Gastrocnemius medialis (tissue), 4 donors: ENCODE measurements at regions of chr16 and their contacts with region 1.

Region 1: DNA sequence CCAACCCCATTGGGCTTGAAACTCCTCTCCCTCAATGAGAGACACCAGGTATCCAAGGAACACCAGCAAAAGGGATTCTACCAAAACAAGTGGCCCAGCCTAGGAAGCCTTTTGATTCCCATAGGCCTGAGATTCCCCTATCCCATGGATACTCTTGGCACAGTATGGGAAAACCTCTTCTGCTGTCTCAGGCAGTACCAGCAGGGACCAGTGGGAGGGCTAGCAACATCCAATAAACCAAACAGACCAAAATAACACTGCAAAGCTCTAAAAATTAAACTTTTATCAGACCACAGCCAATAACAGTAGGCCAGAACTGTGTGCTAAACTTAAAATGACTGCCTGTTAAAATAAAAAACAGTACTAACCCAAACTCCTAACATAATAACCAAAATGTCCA is 153.9 kb upstream of the CES5A start:
- DNase-seq: no peak
- ATAC-seq: no peak
- H3K4me3 ChIP-seq: no peak overlapping the region
- H3K27ac ChIP-seq: no peak overlapping the region
- H3K4me1 ChIP-seq: no peaks in the 10 kb centered on the region
- H3K27me3 ChIP-seq: no peaks in the 10 kb centered on the region
- CTCF ChIP-seq: no peak
- POLR2A ChIP-seq: no peak

Region 2: DNA sequence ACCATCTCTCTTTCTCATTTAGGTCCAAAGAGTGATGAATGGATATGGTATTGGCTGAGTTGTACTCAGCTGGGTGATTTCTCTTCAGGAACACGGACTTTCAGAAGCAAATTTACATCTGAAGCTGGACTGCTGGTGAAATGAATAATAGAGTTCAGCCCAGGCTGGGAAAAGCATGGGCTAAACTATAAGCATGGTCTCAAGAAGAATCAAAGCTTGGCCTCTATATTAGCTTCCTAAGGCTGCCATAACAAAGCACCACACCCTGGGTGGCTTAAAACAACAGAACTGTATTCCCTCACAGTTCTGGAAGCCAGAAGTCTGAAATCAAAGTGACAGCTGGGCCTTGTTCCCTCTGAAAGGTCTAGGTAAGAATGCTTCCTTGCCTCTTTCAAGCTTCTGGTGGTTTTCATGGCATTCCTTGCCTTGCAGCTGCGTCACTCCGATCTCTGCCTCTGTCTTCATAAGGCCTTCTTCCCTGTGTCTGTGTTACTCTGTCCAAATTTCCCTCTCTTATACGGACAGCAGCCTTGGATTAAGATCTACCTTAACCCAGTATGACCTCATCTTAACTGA is 64.0 kb before region 1 on chr16:
- in situ Hi-C with region 1: loop called in 1 of 4 experiments (anchors 10 kb)
- intact Hi-C with region 1: no loop called
- DNase-seq: no peak
- ATAC-seq: no peak
- H3K4me3 ChIP-seq: no peak overlapping the region
- H3K27ac ChIP-seq: no peak overlapping the region
- H3K4me1 ChIP-seq: no peaks in the 10 kb centered on the region
- H3K27me3 ChIP-seq: no peaks in the 10 kb centered on the region
- CTCF ChIP-seq: no peak
- POLR2A ChIP-seq: no peak